Right lobe of liver (tissue), 6 donors: ENCODE measurements at regions of chr20 and their contacts with region 1.

Region 1: GRCh38 chr20:38337561-38338140 is 8.6 kb upstream of the LBP start:
- DNase-seq: peak; percentile 58 to 79 (median 69)
- ATAC-seq: peak; percentile 81 to 92 (median 89)
- H3K4me3 ChIP-seq: no peak overlapping the region
- H3K27ac ChIP-seq: no peak overlapping the region
- H3K4me1 ChIP-seq: peaks cover 0 to 28% (median 13%) of the 10 kb centered on the region in 4 donors
- H3K27me3 ChIP-seq: no peaks in the 10 kb centered on the region
- CTCF ChIP-seq: peak; percentile 74 to 92 (median 84)
- POLR2A ChIP-seq: no peak

Region 2: GRCh38 chr20:38418509-38419204 is 81.0 kb after region 1 on chr20:
- intact Hi-C with region 1: loop called (anchors 10 kb)
- DNase-seq: no peak
- ATAC-seq: peak; percentile 49 to 65 (median 58)
- H3K4me3 ChIP-seq: no peak overlapping the region
- H3K27ac ChIP-seq: no peak overlapping the region
- H3K4me1 ChIP-seq: no peaks in the 10 kb centered on the region
- H3K27me3 ChIP-seq: no peaks in the 10 kb centered on the region
- CTCF ChIP-seq: no peak
- POLR2A ChIP-seq: no peak